Activated CD4-positive, alpha-beta T cell treated with anti-CD3 and anti-CD28 coated beads for 36 hours (primary cell): ENCODE measurements at regions of chr13 and their contacts with region 1.

Region 1: GRCh38 chr13:104996022-104996421 is 1539.4 kb downstream of the EFNB2 start:
- DNase-seq: no peak
- ATAC-seq: no peak
- H3K4me3 Mint-ChIP-seq: no peak overlapping the region
- H3K27ac Mint-ChIP-seq: no peak overlapping the region
- H3K4me1 Mint-ChIP-seq: no peaks in the 10 kb centered on the region
- H3K27me3 Mint-ChIP-seq: no peaks in the 10 kb centered on the region

Region 2: GRCh38 chr13:104984296-104984818 is 11.7 kb before region 1 on chr13:
- CTCF ChIA-PET with region 1: no interaction called
- POLR2A ChIA-PET with region 1: no interaction called
- intact Hi-C with region 1: loop called in 1 of 2 experiments (anchors 1 kb)
- DNase-seq: peak; percentile 57
- ATAC-seq: peak; percentile 68
- H3K4me3 Mint-ChIP-seq: peak overlapping the region; percentile 9
- H3K27ac Mint-ChIP-seq: peak overlapping the region; percentile 70
- H3K4me1 Mint-ChIP-seq: peaks cover 24% of the 10 kb centered on the region
- H3K27me3 Mint-ChIP-seq: no peaks in the 10 kb centered on the region

Region 3: GRCh38 chr13:105311094-105311493 is 315.1 kb after region 1 on chr13:
- CTCF ChIA-PET with region 1: no interaction called
- POLR2A ChIA-PET with region 1: no interaction called
- intact Hi-C with region 1: no loop called
- DNase-seq: no peak
- ATAC-seq: no peak
- H3K4me3 Mint-ChIP-seq: no peak overlapping the region
- H3K27ac Mint-ChIP-seq: no peak overlapping the region
- H3K4me1 Mint-ChIP-seq: no peaks in the 10 kb centered on the region
- H3K27me3 Mint-ChIP-seq: no peaks in the 10 kb centered on the region